ENCODE measurements at regions of chr6 and their contacts with region 1.

Region 1: GRCh38 chr6:46419576-46420002 is 71.7 kb downstream of the RCAN2 start:
- DNase-seq: peak in 7 of 10 donors; percentile 54 to 87 (median 64)
- H3K4me3 ChIP-seq: no peak overlapping the region
- H3K27ac ChIP-seq: peak overlapping the region in 11 of 59 donors; percentile 1 to 43 (median 14)
- H3K27me3 ChIP-seq: no peaks in the 10 kb centered on the region
- CTCF ChIP-seq: peak; percentile 70 to 97 (median 89)

Region 2: DNA sequence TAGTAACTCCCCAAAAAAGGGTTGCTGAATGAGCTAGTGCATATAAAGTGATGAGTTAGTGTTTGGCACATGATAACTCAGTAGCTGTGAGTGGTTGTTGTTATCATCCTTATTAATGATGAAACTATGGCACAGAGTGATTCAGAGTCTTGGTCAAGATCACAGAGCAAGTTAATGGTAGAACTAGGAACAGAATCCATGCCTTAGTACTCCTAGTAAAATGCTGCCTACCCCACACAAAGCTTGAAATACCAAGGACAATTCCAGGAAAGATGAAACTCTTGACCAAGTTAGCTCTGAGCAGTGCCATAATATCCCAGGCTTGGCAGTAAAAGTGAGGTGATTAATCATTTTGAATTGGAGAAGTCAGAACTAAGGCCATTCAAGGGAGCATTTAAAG is 139.7 kb before region 1 on chr6:
- intact Hi-C with region 1: no loop called
- DNase-seq: no peak
- H3K4me3 ChIP-seq: no peak overlapping the region
- H3K27ac ChIP-seq: peak overlapping the region in 1 of 59 donors; percentile 18
- H3K27me3 ChIP-seq: no peaks in the 10 kb centered on the region
- CTCF ChIP-seq: no peak

Region 3: GRCh38 chr6:46347669-46348068 is 71.9 kb before region 1 on chr6:
- intact Hi-C with region 1: no loop called
- DNase-seq: no peak
- H3K4me3 ChIP-seq: no peak overlapping the region
- H3K27ac ChIP-seq: no peak overlapping the region
- H3K27me3 ChIP-seq: no peaks in the 10 kb centered on the region
- CTCF ChIP-seq: no peak

Region 4: GRCh38 chr6:46626228-46626909 is 206.8 kb after region 1 on chr6:
- intact Hi-C with region 1: loop called (anchors 2 kb)
- DNase-seq: no peak
- H3K4me3 ChIP-seq: peak overlapping the region in 19 of 59 donors; percentile 4 to 43 (median 17)
- H3K27ac ChIP-seq: peak overlapping the region in 10 of 59 donors; percentile 2 to 58 (median 15)
- H3K27me3 ChIP-seq: no peaks in the 10 kb centered on the region
- CTCF ChIP-seq: peak; percentile 66 to 93 (median 82)

Region 5: GRCh38 chr6:46781478-46782378 is 362.1 kb after region 1 on chr6:
- intact Hi-C with region 1: loop called in 1 of 2 experiments (anchors 5 kb)
- DNase-seq: peak in 4 of 10 donors; percentile 44 to 77 (median 53)
- H3K4me3 ChIP-seq: no peak overlapping the region
- H3K27ac ChIP-seq: no peak overlapping the region
- H3K27me3 ChIP-seq: no peaks in the 10 kb centered on the region
- CTCF ChIP-seq: peak; percentile 59 to 87 (median 72)

Measured in dorsolateral prefrontal cortex (tissue), 120 donors.